ENCODE measurements at regions of chr17 and their contacts with region 1.

Region 1: DNA sequence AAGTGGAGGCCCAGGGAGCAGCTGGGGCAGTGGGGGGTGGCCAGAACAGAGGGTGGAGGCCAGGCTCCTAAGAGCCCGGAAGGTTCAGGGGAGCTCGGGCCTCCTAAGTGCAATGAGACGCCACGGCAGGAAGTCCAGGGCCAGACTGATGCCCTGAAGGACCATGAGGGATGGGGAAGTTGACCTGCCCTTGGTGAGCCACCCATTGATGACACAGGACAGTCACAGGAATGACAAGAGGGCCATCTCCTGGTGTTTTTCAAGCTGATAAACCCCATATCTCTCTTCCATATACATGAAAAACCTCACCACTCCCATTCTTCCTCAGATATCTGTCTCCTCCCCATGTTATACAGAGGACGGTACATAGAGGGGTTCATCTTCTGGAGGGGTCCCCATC is 5.8 kb upstream of the MRPL58 start:
- DNase-seq: no peak
- ATAC-seq: peak in 3 of 4 donors; percentile 25 to 72 (median 46)
- H3K4me3 ChIP-seq: no peak overlapping the region
- H3K27ac ChIP-seq: no peak overlapping the region
- H3K4me1 ChIP-seq: peaks cover 0 to 2% (median 0%) of the 10 kb centered on the region in 4 donors
- H3K27me3 ChIP-seq: no peaks in the 10 kb centered on the region
- CTCF ChIP-seq: peak in 2 of 4 donors; percentile 8 to 11
- POLR2A ChIP-seq: no peak

Region 2: GRCh38 chr17:74892974-74893911 is 113.4 kb before region 1 on chr17 and contains the start of gene FADS6:
- intact Hi-C with region 1: no loop called
- DNase-seq: peak; percentile 51 to 75 (median 68)
- ATAC-seq: peak; percentile 91 to 96 (median 94)
- H3K4me3 ChIP-seq: peak within 1 kb of the TSS; percentile 40 to 56 (median 54)
- H3K27ac ChIP-seq: peak within 1 kb of the TSS in 1 of 3 donors; percentile 64
- H3K4me1 ChIP-seq: no peaks in the 10 kb centered on the region
- H3K27me3 ChIP-seq: no peaks in the 10 kb centered on the region
- CTCF ChIP-seq: no peak
- POLR2A ChIP-seq: no peak
- total RNA-seq, gene FADS6: 2.1 to 6.1 (median 3.7) TPM

Region 3: DNA sequence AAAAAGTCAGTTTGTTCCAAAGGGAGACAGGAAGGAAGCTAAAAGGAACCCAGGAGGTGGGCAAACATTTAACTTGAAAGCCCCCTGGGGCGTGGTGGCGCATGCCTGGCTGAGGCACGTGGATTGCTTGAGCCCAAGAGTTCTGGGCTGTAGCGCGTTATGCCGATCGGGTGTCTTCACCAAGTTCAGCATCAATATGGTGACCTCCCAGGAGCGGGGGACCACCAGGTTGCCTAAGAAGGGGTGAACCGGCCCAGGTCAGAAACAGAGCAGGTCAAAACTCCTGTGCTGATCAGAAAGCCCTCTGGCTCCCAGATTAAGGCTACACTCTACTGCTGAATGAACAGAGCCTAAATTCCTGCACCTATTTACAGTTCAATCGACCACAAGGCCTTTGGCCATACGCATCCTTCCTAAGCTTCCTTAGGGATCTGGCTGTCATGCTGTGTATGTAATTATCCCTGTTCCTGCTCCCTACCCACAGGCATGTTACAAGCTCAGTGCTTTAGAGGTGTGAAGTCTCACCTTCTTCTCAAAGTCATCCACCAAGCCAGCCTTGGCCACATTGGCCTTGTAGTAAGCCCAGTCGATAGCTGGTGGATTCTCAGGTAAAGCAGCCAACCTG is 35.1 kb after region 1 on chr17:
- intact Hi-C with region 1: loop called in 1 of 2 experiments (anchors 5 kb)
- DNase-seq: no peak
- ATAC-seq: no peak
- H3K4me3 ChIP-seq: no peak overlapping the region
- H3K27ac ChIP-seq: no peak overlapping the region
- H3K4me1 ChIP-seq: peaks cover 0 to 7% (median 3%) of the 10 kb centered on the region in 4 donors
- H3K27me3 ChIP-seq: no peaks in the 10 kb centered on the region
- CTCF ChIP-seq: no peak
- POLR2A ChIP-seq: no peak

Measured in right lobe of liver (tissue), 6 donors.